Tibial artery (tissue), 4 donors: ENCODE measurements at regions of chr1 and their contacts with region 1.

Region 1: GRCh38 chr1:60126723-60127122 is 53.2 kb upstream of the C1orf87 start:
- DNase-seq: no peak
- H3K4me3 ChIP-seq: no peak overlapping the region
- H3K27ac ChIP-seq: no peak overlapping the region
- H3K4me1 ChIP-seq: peaks cover 0 to 17% (median 0%) of the 10 kb centered on the region in 4 donors
- H3K27me3 ChIP-seq: no peaks in the 10 kb centered on the region
- CTCF ChIP-seq: peak; percentile 21

Region 2: GRCh38 chr1:59971464-59971911 is 155.2 kb before region 1 on chr1:
- intact Hi-C with region 1: loop called (anchors 10 kb)
- DNase-seq: peak; percentile 68 to 81
- H3K4me3 ChIP-seq: no peak overlapping the region
- H3K27ac ChIP-seq: no peak overlapping the region
- H3K4me1 ChIP-seq: peaks cover 0 to 7% (median 5%) of the 10 kb centered on the region in 4 donors
- H3K27me3 ChIP-seq: no peaks in the 10 kb centered on the region
- CTCF ChIP-seq: peak; percentile 91

Region 3: GRCh38 chr1:60185684-60186083 is 59.0 kb after region 1 on chr1:
- intact Hi-C with region 1: no loop called
- DNase-seq: no peak
- H3K4me3 ChIP-seq: no peak overlapping the region
- H3K27ac ChIP-seq: no peak overlapping the region
- H3K4me1 ChIP-seq: no peaks in the 10 kb centered on the region
- H3K27me3 ChIP-seq: no peaks in the 10 kb centered on the region
- CTCF ChIP-seq: no peak